Pancreas (tissue), 10 donors: ENCODE measurements at regions of chr2 and their contacts with region 1.

Region 1: DNA sequence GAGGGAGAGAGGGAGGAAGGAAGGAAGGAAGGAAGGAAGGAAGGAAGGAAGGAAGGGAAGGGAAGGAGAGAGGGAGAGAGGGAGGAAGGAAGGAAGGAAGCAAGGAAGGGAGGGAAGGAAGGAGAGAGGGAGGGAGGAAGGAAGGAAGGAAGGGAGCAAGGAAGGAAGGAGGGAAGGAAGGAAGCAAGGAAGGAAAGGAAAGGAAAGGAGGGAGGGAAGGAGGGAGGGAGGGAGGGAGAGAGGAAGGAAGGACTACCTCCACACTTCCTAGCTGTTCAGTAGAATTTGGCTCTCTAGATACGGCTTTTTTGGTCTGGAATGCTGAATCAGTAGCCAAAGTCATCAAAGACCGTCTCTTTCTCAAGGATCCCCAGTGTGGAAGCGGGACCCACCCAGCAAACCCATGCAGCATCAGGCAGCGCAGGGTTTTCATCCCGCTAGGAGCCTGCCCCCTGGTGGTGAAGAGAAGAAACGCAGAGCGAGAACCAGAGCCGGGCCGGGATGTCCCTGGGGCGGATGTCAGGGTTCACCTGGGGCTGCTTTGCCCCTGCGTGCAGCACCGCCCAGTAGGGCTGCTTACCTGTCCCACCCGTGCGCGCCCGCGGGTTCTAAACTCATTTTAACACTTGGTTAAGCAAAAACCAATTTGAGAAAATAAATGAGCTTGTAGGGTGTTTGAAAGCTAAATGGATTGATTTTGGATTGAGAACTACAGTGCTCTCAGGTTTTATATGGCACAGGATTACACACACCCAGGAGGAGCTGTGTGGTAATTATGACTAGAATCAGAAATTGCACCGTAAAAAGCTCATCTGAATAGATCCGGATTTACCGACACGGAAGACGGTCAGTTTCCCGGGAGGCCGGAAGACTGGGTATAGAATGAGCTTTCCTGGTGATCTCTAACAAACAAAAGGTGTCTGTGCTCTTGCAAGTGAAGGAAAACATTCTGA is 48.1 kb upstream of the ARL4C start:
- DNase-seq: peak; percentile 30 to 90 (median 70)
- ATAC-seq: peak; percentile 85 to 94 (median 88)
- H3K4me3 ChIP-seq: no peak overlapping the region
- H3K27ac ChIP-seq: no peak overlapping the region
- H3K4me1 ChIP-seq: no peaks in the 10 kb centered on the region
- H3K27me3 ChIP-seq: no peaks in the 10 kb centered on the region
- CTCF ChIP-seq: peak; percentile 75 to 97 (median 96)

Region 2: DNA sequence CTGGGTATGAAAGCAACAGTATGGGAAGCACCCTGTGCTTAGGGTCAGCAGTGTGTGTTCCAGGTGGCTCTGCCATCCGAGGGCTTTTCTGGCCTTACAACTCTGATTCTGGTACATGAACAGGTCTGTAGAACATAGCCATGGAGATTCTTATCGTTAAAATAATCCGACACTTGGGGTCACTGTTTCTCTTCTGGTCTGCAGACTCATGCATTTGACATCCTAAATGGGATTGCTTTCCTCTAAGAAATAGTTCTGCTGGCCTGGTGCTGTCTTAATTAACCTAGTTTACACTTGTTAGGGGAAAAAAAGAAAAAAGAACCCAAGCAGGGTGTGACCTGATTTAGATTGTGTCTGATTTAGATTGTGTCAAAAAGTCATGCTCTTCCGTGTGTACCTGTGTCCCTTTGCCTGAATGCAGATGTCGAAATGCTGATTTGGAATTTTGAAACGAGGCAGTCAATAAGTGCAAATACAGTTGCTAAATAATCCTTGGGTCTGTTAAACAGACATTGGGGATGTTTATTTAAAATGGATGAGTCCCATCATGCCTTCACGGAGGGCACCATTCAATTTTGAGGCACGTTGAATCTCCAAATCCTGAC is 568.1 kb before region 1 on chr2:
- intact Hi-C with region 1: loop called in 2 of 3 experiments (anchors 10 kb)
- DNase-seq: peak in 1 of 6 donors; percentile 19
- ATAC-seq: peak; percentile 33 to 76 (median 60)
- H3K4me3 ChIP-seq: no peak overlapping the region
- H3K27ac ChIP-seq: peak overlapping the region in 2 of 4 donors; percentile 54 to 59
- H3K4me1 ChIP-seq: peaks cover 0 to 29% (median 0%) of the 10 kb centered on the region in 3 donors
- H3K27me3 ChIP-seq: peaks cover 0 to 5% (median 0%) of the 10 kb centered on the region in 4 donors
- CTCF ChIP-seq: peak in 2 of 4 donors; percentile 11 to 18

Region 3: DNA sequence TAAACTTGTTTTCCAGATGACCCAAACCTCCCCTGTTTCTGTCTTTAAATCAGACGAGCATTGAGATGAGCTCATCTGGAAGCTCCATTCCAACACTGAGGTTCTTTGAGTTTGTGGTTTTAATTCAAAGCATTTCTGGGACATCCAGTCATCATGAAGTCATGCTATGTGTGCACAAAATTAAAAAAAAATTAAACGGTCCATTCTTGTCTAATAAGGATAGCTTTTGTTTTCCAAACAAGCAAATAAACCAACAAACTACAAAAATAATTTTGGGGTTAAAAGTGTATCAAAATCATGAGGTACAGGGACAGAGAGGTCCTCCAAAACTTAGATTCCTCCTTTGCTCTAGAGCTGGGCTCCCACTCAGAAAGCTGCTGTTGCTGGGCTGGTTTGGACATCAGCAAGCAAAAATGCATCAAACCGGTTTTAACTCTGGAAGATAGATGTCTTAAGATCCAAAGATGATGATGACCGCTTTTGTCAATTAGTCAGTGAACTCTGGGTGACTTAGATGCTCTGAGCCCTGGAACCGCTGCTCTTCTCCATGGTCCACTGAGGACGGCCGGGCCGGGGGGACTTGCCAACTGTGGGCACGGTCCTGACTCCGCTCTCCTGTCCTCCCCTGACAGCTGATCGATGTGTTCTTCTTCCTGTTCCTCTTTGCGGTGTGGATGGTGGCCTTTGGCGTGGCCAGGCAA is 562.4 kb before region 1 on chr2:
- intact Hi-C with region 1: loop called in 2 of 3 experiments (anchors 10 kb)
- DNase-seq: no peak
- ATAC-seq: peak in 2 of 4 donors; percentile 50 to 72
- H3K4me3 ChIP-seq: no peak overlapping the region
- H3K27ac ChIP-seq: peak overlapping the region in 2 of 4 donors; percentile 16 to 64
- H3K4me1 ChIP-seq: peaks cover 0 to under 1% (median 0%) of the 10 kb centered on the region in 3 donors
- H3K27me3 ChIP-seq: peaks cover 0 to 5% (median 0%) of the 10 kb centered on the region in 4 donors
- CTCF ChIP-seq: no peak

Region 4: GRCh38 chr2:234135720-234136221 is 409.2 kb before region 1 on chr2:
- intact Hi-C with region 1: loop called in 1 of 3 experiments (anchors 10 kb)
- DNase-seq: peak in 5 of 6 donors; percentile 36 to 66 (median 49)
- ATAC-seq: peak; percentile 69 to 95 (median 90)
- H3K4me3 ChIP-seq: no peak overlapping the region
- H3K27ac ChIP-seq: no peak overlapping the region
- H3K4me1 ChIP-seq: peaks cover 0 to 4% (median 0%) of the 10 kb centered on the region in 3 donors
- H3K27me3 ChIP-seq: no peaks in the 10 kb centered on the region
- CTCF ChIP-seq: peak in 3 of 4 donors; percentile 48 to 62 (median 54)

Region 5: DNA sequence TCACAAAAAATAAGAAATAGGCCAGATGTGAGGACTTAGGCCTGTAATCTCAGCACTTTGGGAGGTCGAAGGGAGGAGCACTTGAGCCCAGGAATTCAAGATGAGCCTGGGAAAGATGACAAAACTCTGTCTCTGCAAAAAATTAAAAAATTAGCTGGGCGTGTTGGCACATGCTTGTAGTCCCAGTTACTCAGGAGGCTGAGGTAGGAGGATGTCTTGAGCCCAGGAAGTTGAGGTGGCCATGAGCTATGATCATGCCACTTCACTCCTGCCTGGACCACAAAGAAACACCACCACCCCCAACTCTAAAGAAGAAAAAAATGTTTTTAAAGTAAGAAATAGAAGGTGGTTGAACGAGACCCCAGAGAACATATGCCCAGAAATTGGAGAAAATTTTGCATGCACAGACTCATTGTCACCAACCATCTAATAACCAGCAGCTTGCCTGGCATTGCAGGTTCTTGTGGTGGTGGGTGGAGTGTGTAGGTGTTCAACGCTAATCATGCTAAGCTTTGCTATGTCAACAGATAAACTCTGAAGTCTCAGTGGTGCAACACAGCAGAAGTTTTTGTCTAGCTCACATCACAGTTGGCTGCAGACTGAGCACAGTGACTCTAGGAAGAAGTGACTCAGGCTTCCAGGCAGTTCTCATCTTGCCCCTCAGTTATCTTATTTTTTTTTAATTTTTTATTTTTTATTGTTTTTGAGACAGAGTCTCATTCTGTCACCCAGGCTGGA is 66.6 kb before region 1 on chr2:
- intact Hi-C with region 1: no loop called
- DNase-seq: no peak
- ATAC-seq: no peak
- H3K4me3 ChIP-seq: no peak overlapping the region
- H3K27ac ChIP-seq: no peak overlapping the region
- H3K4me1 ChIP-seq: no peaks in the 10 kb centered on the region
- H3K27me3 ChIP-seq: no peaks in the 10 kb centered on the region
- CTCF ChIP-seq: no peak

Region 6: DNA sequence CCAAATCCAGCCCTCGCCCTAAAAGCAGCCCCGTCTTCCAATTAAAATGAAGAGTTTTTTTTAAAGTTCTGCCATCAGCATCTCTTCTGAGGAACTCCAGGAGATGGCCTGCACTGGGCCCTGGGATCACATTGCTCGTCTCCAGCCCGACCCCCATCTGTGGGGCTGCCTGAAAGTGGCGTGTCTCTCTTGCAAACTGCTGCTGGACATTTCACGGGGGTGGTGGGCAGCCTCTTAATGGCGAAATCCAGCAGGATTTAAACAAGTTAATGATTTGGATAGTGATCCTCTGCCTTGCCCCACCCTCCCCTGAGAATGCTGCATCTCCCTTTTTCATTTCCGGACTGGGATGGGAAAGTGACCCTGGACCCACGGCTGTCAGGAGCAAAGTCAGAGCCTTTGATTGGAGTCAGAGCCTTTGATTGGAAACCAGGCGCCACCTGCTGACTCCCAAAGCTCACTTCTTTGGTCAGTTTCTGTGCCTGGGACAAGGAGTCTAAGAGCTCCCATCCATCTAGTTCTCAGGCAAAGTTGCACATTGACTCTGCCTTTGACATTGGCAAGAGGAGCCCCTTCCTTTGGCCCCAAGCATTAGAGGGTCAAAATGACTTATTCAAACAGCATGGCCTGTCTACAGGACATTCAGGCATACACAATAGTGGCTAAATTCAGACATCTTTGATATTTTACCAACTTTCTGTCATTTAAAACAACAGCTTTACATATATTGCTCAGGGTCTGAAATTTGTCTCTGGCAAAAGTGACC is 562.1 kb after region 1 on chr2:
- intact Hi-C with region 1: loop called (anchors 5 kb)
- DNase-seq: peak in 5 of 6 donors; percentile 50 to 77 (median 56)
- ATAC-seq: peak; percentile 81 to 98 (median 92)
- H3K4me3 ChIP-seq: no peak overlapping the region
- H3K27ac ChIP-seq: no peak overlapping the region
- H3K4me1 ChIP-seq: no peaks in the 10 kb centered on the region
- H3K27me3 ChIP-seq: no peaks in the 10 kb centered on the region
- CTCF ChIP-seq: peak; percentile 28 to 50 (median 49)